ENCODE measurements at regions of chr14 and their contacts with region 1.

Region 1: DNA sequence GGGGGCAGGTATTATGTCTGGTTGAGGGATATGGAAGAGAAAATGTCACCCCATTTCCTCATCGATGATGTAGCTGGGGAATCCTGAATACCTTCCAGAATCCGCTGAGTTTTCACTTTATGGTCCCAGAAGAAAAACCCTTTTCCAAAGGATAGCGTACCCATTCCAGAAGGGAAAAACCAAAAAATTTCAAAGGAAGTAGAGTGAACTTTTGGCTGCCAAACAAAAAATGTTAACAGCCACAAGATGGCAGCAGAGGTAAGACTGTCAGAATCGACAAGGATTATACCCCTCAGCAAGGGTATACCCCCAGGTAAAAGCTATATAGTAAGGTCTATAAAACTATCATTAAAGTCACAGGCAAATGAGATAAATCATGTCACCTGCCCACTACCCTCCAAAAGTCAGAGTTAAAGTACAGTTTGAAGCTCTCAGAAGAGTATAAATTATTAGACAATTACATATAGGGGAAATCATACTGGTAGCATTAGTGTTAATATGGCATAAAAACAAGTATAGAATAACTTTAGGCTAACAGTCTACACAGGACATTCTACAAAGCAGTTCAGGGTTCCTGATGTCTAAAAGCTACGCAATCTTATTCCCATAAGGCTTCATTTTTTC is 18.0 kb downstream of the ACIN1 start:
- DNase-seq: no peak
- CTCF ChIP-seq: peak; percentile 47

Region 2: GRCh38 chr14:23089498-23090253 is 12.8 kb after region 1 on chr14:
- CTCF ChIA-PET with region 1: interaction called, 50 read pairs
- POLR2A ChIA-PET with region 1: interaction called, 7 read pairs
- DNase-seq: no peak
- CTCF ChIP-seq: no peak

Region 3: DNA sequence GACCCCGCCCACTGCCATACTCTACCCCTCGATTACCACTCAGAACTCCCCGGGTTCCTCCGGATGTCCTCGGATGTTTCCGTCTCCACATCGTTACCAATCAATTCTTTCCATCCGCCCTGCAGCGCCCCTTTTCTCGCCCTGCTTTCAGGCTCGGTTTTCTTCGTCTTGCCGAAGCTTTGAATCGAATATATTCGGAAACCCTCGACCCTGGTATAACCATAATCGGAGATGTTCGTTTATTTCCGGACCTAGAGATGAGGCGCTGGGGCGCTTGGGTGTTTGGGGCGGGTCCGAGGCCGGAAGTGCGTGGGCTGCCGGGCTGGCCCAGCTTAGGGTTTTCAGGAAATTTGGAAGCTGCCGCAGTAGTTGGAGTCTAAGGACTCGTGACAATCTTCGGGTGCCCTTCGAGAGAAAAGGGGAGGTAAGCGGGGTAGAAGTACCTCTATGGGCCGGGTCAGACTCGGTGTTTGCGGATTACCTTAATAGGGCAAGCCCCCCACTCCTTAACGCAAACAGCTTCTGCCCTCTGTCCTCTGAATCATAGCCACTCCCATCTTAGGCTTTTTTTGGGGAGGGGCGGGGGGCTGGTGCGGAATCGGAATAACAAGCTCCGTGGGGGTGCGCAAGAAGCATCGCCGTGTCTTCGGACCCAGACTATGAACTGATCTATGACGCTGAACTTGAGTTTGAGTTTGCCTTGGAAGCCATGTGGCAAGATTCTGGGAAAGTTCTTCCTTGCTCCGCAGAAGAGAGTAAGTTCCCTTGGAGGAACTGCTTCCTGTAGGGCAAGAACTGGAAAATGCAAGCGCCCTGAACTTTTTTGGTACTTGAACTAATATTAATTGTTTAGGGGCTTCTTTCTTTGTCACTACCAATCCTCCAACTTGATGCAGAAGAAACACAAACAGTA is 18.6 kb after region 1 on chr14 and contains the start of gene C14orf119:
- CTCF ChIA-PET with region 1: interaction called, 50 read pairs
- POLR2A ChIA-PET with region 1: interaction called, 7 read pairs
- DNase-seq: peak; percentile 99
- CTCF ChIP-seq: no peak

Region 4: DNA sequence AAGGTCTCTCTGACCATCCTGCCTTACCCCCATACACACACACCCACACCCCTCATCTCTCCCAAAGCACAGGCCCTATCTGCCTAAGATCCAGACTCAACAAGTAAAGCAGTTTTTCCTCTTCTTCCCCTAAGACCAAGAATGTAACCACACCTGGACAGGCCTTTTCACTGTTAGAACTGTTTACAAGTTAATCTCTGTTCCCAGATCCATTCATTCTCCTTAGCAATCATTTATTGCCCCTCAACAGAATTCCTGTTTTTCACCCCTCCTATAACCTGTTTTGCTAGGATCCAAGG is 29.8 kb after region 1 on chr14:
- CTCF ChIA-PET with region 1: interaction called, 25 read pairs
- POLR2A ChIA-PET with region 1: no interaction called
- DNase-seq: no peak
- CTCF ChIP-seq: no peak

Region 5: GRCh38 chr14:23186913-23187654 is 110.2 kb after region 1 on chr14:
- CTCF ChIA-PET with region 1: interaction called, 12 read pairs
- POLR2A ChIA-PET with region 1: no interaction called
- DNase-seq: peak; percentile 65
- CTCF ChIP-seq: peak; percentile 54